MCF 10A (cell line): ENCODE measurements at regions of chr1 and their contacts with region 1.

Region 1: DNA sequence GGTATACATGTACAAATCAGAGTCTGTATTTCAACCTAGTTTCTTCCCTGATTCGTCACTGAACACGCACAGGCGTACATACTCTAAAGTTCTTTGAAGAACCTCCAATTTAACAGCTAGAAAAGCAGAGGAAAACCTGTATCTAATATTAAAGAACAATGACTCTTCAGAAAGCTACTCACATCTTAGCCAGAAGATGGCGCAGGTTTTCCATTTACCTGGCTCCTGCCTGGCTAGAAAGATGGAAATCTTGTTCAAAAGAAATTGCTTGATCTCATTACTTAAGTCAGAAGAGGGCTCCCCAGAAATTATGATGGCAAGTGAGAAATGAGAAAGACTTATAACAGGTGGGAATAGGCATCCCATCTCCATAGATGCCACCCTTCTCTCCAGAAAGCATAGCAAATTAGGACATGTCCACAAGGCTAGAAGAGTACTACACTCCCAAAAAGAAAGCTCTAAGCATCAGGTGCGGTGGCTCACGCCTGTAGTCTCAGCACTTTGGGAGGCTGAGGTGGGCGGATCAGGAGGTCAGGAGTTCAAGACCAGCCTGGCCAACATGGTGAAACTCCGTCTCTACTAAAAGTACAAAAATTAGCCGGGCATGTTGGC is 19.0 kb upstream of the L1TD1 start:
- DNase-seq: peak; percentile 72
- H3K4me3 Mint-ChIP-seq: no peak overlapping the region
- H3K27ac Mint-ChIP-seq: no peak overlapping the region
- H3K4me1 Mint-ChIP-seq: no peaks in the 10 kb centered on the region
- H3K27me3 Mint-ChIP-seq: no peaks in the 10 kb centered on the region
- CTCF ChIP-seq: peak; percentile 70

Region 2: DNA sequence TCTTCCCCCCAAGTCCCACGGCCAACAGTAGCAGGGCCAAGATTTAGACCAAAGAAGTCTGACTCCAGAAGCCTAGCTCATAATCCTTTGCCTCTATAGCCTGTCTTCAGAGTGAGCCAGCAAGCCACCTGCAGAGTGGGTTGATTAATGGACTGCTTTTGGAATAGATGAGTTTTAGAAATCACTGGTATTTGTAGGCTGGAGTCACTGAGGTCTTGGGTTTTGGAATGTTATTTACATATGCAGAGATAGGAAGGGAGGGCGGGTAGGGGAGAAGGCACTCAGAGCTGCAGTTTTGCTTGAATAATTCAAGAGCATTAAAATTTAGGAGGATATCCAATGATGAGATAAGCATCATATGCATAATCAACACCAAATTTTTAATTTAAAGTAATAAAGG is 71.8 kb before region 1 on chr1:
- CTCF ChIA-PET with region 1: no interaction called
- POLR2A ChIA-PET with region 1: no interaction called
- intact Hi-C with region 1: no loop called
- DNase-seq: no peak
- H3K4me3 Mint-ChIP-seq: no peak overlapping the region
- H3K27ac Mint-ChIP-seq: no peak overlapping the region
- H3K4me1 Mint-ChIP-seq: no peaks in the 10 kb centered on the region
- H3K27me3 Mint-ChIP-seq: no peaks in the 10 kb centered on the region
- CTCF ChIP-seq: no peak

Region 3: GRCh38 chr1:62209931-62210595 is 34.4 kb after region 1 on chr1:
- CTCF ChIA-PET with region 1: interaction called, 7 read pairs
- POLR2A ChIA-PET with region 1: no interaction called
- intact Hi-C with region 1: loop called (anchors 1 kb)
- DNase-seq: peak; percentile 70
- H3K4me3 Mint-ChIP-seq: no peak overlapping the region
- H3K27ac Mint-ChIP-seq: no peak overlapping the region
- H3K4me1 Mint-ChIP-seq: peaks cover 12% of the 10 kb centered on the region
- H3K27me3 Mint-ChIP-seq: no peaks in the 10 kb centered on the region
- CTCF ChIP-seq: peak; percentile 15

Region 4: DNA sequence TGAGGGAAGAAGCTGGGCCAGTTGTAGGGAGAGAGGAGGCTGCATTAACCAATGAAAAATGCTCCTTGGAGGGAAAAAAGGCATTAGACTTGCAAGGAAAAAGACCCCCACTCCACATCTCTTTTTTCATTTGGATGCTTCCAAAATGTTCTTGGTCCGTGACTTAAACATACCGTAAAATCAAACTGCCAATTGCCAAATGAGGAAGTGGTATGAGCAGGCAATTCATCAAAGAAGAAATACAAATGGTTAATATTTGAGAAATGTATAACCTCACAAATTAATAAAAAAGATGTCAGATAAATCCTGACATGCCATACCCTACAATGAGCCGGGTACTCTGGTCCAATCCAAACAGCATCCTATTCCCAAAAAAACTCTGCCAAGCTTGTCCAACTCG is 113.0 kb after region 1 on chr1:
- CTCF ChIA-PET with region 1: no interaction called
- POLR2A ChIA-PET with region 1: no interaction called
- intact Hi-C with region 1: no loop called
- DNase-seq: no peak
- H3K4me3 Mint-ChIP-seq: no peak overlapping the region
- H3K27ac Mint-ChIP-seq: no peak overlapping the region
- H3K4me1 Mint-ChIP-seq: peaks cover 19% of the 10 kb centered on the region
- H3K27me3 Mint-ChIP-seq: no peaks in the 10 kb centered on the region
- CTCF ChIP-seq: no peak

Region 5: GRCh38 chr1:62395291-62395690 is 219.6 kb after region 1 on chr1:
- CTCF ChIA-PET with region 1: interaction called, 241 read pairs
- POLR2A ChIA-PET with region 1: no interaction called
- intact Hi-C with region 1: no loop called
- DNase-seq: no peak
- H3K4me3 Mint-ChIP-seq: no peak overlapping the region
- H3K27ac Mint-ChIP-seq: no peak overlapping the region
- H3K4me1 Mint-ChIP-seq: no peaks in the 10 kb centered on the region
- H3K27me3 Mint-ChIP-seq: no peaks in the 10 kb centered on the region
- CTCF ChIP-seq: no peak

Region 6: DNA sequence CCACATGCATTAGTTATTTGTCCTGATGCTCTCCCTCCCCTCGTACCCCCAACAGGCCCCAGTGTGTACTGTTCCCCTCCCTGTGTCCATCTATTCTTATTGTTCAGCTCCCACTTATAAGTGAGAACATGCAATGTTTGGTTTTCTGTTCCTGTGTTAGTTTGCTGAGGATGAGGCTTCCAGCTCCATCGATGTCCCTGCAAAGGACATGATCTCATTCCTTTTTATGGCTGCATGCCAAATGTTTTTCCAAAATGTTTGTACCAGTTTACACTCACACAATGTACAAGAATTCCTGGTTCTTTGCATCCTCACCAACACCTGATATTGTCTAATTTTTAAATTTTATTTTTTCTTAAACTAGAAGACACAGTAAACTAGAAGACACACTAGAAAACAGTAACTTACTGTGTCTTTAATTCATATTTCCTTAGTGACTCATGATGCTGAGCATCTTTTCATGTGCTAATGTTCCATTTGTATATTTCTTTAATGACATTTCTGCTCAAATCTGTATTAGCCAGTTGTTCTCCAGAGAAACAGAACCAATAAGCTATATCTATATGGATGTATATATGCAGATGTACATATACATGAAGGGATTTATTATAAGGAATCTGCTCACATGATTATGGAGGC is 241.8 kb after region 1 on chr1:
- CTCF ChIA-PET with region 1: interaction called, 241 read pairs
- POLR2A ChIA-PET with region 1: no interaction called
- intact Hi-C with region 1: no loop called
- DNase-seq: no peak
- H3K4me3 Mint-ChIP-seq: no peak overlapping the region
- H3K27ac Mint-ChIP-seq: no peak overlapping the region
- H3K4me1 Mint-ChIP-seq: peaks cover 8% of the 10 kb centered on the region
- H3K27me3 Mint-ChIP-seq: no peaks in the 10 kb centered on the region
- CTCF ChIP-seq: no peak